ENCODE measurements at regions of chr22 and their contacts with region 1.

Region 1: DNA sequence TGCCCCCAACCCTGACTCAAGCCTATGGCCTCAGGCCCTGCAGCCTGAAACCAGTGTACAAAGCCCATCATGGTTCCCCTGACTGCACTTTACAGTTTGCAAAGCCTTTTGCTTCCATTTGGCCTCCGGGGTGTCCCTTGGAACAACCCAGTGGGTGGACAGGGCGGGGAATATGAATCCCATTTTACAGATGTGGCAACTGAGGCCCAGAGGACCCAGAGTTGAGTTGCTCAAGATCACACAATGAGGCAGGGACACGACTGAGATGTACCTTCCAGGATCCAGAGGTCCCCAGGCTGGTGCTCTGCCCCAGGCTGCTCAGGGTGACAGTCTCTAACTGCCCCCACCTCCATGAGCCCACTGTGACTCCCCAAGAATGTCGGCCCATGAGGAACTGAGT is 5.4 kb upstream of the POLDIP3 start:
- DNase-seq: no peak
- ATAC-seq: no peak
- H3K4me3 ChIP-seq: no peak overlapping the region
- H3K27ac ChIP-seq: no peak overlapping the region
- H3K4me1 ChIP-seq: peaks cover 8% of the 10 kb centered on the region
- H3K27me3 ChIP-seq: no peaks in the 10 kb centered on the region
- CTCF ChIP-seq: no peak

Region 2: GRCh38 chr22:42649246-42650099 is 29.4 kb after region 1 on chr22 and contains the start of gene CYB5R3:
- CTCF ChIA-PET with region 1: no interaction called
- POLR2A ChIA-PET with region 1: interaction called, 10 read pairs
- in situ Hi-C with region 1: no loop called
- intact Hi-C with region 1: no loop called
- DNase-seq: no peak
- ATAC-seq: peak; percentile 93
- H3K4me3 ChIP-seq: peak within 1 kb of the TSS; percentile 87 to 92
- H3K27ac ChIP-seq: peak within 1 kb of the TSS; percentile 85
- H3K4me1 ChIP-seq: no peaks in the 10 kb centered on the region; the same call in none of the 2 replicates
- H3K27me3 ChIP-seq: no peaks in the 10 kb centered on the region
- CTCF ChIP-seq: no peak
- total RNA-seq, gene CYB5R3: 102 TPM